ENCODE measurements at regions of chr3 and their contacts with region 1.

Region 1: DNA sequence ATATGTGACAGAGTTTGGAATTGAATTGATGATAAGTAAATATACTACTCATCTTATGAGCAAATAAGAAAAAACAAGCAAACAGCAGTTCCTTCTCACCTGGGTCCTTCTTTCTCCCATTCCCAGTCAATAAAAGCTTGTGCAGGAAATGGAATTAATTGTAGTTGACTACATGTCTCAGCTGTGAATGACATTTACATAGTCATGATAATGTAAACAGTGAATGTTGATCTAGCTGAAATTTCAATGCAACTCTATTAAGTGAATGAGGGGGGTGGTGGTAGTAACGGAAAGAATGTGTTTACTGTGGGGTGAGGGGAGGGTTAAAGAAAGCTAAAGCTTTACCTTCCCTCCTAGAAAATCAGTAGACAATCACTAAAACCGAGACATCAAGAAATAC is 76.3 kb downstream of the NFKBIZ start:
- DNase-seq: no peak
- H3K4me3 ChIP-seq: no peak overlapping the region
- H3K27ac ChIP-seq: peak overlapping the region; percentile 44
- H3K4me1 ChIP-seq: peaks cover 31% of the 10 kb centered on the region
- H3K27me3 ChIP-seq: no peaks in the 10 kb centered on the region
- CTCF ChIP-seq: no peak

Region 2: DNA sequence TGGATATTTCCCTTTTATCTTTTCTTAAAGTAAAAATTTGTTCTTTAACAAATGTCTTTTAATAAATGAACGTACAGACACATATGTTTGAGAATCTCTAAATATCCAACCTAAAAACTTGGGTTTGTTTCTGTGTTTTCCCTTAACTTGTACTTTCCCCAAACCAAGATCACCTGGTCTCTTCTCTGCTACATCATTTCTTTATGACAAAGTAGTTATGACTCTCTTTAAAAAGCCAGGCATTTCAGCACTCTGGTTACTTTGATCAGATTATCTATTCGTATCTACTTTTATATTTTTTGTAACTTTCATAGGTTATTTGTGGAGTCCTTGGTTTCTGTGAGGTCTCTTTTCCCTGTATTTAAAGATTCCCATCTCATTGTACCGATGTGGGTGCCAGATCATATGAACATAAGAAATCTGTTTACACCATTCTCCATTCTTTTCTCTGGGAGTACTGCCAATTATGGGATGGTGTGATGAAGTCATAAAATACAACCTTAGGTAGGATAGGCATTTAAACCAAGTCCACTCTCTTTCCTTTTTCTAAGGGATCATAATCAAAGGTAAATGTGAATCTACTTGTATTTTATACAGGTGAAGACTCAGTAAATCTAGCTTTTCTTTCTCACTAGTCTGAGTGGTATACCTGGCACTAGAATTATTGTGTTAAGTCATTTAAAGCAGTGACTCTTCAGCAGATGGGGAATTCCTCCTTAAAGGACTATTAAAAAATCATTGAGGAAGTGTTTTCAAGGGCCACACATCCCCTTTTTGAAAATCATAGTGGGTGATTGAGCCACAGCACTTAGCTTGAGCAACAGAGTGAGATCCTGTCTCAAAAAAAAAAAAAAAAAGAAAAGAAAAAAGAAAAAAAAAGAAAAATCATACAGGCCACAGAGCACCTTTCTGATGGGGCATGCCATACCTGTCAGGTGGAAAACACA is 88.6 kb before region 1 on chr3:
- CTCF ChIA-PET with region 1: no interaction called
- dilution Hi-C with region 1: no loop called
- in situ Hi-C with region 1: no loop called
- intact Hi-C with region 1: no loop called
- DNase-seq: peak; percentile 63
- H3K4me3 ChIP-seq: no peak overlapping the region
- H3K27ac ChIP-seq: no peak overlapping the region
- H3K4me1 ChIP-seq: no peaks in the 10 kb centered on the region
- H3K27me3 ChIP-seq: no peaks in the 10 kb centered on the region
- CTCF ChIP-seq: no peak

Region 3: DNA sequence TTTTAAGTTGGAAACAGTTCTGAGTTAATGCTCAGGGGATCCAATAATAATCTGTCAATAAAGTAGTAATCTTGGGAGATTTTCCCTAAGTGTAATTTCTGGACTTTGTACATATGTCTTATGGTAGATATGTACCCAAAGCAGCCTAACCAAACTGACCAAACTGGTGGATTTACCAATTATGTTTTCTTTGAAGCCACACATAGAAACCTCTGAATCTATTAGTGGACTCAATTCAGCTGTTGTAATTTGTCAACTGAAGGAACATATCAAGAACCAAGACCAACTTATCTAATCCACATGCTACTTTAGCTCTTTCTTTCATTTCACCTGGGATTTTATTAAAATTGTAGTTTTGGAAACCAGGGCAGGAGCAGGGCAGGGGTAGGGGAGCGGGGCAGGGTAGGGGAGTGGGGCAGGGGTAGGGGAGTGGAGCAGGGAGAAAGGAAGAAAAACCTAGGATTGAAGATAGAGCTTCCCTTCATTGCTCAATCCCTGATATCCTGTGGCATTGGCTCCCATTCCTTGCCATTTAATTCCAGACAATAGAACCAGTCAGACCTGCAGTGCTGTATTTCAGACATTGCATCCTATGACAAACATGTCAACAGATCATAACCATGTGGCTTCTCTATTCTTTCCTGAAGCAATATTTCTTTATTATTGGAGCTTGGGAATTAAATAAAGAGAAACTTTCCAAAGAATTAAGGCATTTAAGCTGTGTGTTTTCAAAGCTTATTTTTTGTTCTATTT is 25.6 kb after region 1 on chr3:
- CTCF ChIA-PET with region 1: interaction called, 11 read pairs
- dilution Hi-C with region 1: no loop called
- in situ Hi-C with region 1: no loop called
- intact Hi-C with region 1: no loop called
- DNase-seq: peak; percentile 59
- H3K4me3 ChIP-seq: no peak overlapping the region
- H3K27ac ChIP-seq: peak overlapping the region; percentile 22
- H3K4me1 ChIP-seq: peaks cover 14% of the 10 kb centered on the region
- H3K27me3 ChIP-seq: no peaks in the 10 kb centered on the region
- CTCF ChIP-seq: no peak